CD8-positive, alpha-beta memory T cell (primary cell): ENCODE measurements at regions of chr5 and their contacts with region 1.

Region 1: GRCh38 chr5:58460732-58461286 is 923 bp upstream of the PLK2 start:
- DNase-seq: peak; percentile 75 to 87 (median 78)
- H3K4me3 ChIP-seq: peak overlapping the region; percentile 69
- H3K4me3 Mint-ChIP-seq: peak overlapping the region; percentile 84 to 93 (median 87)
- H3K27ac ChIP-seq: peak overlapping the region; percentile 52
- H3K27ac Mint-ChIP-seq: peak overlapping the region; percentile 38 to 96 (median 78)
- H3K4me1 ChIP-seq: peaks cover 11% of the 10 kb centered on the region
- H3K4me1 Mint-ChIP-seq: peaks cover 13 to 17% (median 17%) of the 10 kb centered on the region in 3 donors
- H3K27me3 ChIP-seq: no peaks in the 10 kb centered on the region
- H3K27me3 Mint-ChIP-seq: peaks cover 19 to 22% of the 10 kb centered on the region in 2 donors

Region 2: DNA sequence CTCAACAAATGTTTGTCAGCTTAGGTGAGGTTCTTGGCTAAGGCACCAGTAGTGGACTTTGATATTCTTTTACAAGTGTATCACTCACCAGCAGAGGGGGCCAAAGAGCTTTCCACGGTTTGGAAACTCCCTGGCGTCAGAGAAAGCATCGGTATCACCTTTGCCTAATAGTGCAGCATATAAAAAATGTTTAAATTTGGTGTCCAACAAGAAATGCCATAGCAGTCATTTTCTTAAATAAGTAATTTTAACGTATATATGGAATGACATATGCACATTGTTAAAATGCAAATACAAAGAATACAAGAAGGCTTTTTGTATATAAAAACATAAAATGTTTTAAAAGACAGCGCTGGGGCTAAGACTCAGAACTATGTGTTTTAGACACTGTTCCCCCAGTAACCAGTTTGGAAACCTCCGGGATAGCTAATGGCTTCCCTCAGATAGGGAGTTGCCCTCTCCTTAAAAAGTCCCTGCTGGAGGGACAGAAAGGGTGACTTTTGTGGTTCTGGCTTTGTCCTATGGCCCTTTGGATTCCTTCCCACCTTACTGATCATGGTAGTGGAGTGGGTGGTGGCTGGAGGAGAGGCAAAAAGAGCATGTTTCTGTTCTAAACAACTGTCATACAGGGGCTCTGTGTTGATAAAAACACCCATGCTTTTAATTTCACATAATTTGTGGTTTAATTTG is 1162.4 kb before region 1 on chr5:
- CTCF ChIA-PET with region 1: interaction called, 41 read pairs
- POLR2A ChIA-PET with region 1: interaction called, 3 read pairs
- DNase-seq: peak; percentile 72 to 82 (median 78)
- H3K4me3 ChIP-seq: peak overlapping the region; percentile 33
- H3K4me3 Mint-ChIP-seq: peak overlapping the region; percentile 62 to 85 (median 81)
- H3K27ac ChIP-seq: no peak overlapping the region
- H3K27ac Mint-ChIP-seq: peak overlapping the region in 6 of 8 donors; percentile 1 to 89 (median 48)
- H3K4me1 ChIP-seq: peaks cover 10% of the 10 kb centered on the region
- H3K4me1 Mint-ChIP-seq: peaks cover 11 to 26% (median 17%) of the 10 kb centered on the region in 3 donors
- H3K27me3 ChIP-seq: no peaks in the 10 kb centered on the region
- H3K27me3 Mint-ChIP-seq: peaks cover 0 to 8% of the 10 kb centered on the region in 2 donors

Region 3: GRCh38 chr5:57650360-57651069 is 810.3 kb before region 1 on chr5:
- CTCF ChIA-PET with region 1: interaction called, 12 read pairs
- POLR2A ChIA-PET with region 1: no interaction called
- DNase-seq: peak in 1 of 5 donors; percentile 1
- H3K4me3 ChIP-seq: no peak overlapping the region
- H3K4me3 Mint-ChIP-seq: no peak overlapping the region
- H3K27ac ChIP-seq: no peak overlapping the region
- H3K27ac Mint-ChIP-seq: no peak overlapping the region
- H3K4me1 ChIP-seq: no peaks in the 10 kb centered on the region
- H3K4me1 Mint-ChIP-seq: no peaks in the 10 kb centered on the region
- H3K27me3 ChIP-seq: no peaks in the 10 kb centered on the region
- H3K27me3 Mint-ChIP-seq: peaks cover 0 to 3% of the 10 kb centered on the region in 2 donors

Region 4: GRCh38 chr5:58871648-58872242 is 410.9 kb after region 1 on chr5:
- CTCF ChIA-PET with region 1: no interaction called
- POLR2A ChIA-PET with region 1: no interaction called
- DNase-seq: peak in 1 of 5 donors; percentile 13
- H3K4me3 ChIP-seq: no peak overlapping the region
- H3K4me3 Mint-ChIP-seq: no peak overlapping the region
- H3K27ac ChIP-seq: no peak overlapping the region
- H3K27ac Mint-ChIP-seq: no peak overlapping the region
- H3K4me1 ChIP-seq: no peaks in the 10 kb centered on the region
- H3K4me1 Mint-ChIP-seq: no peaks in the 10 kb centered on the region
- H3K27me3 ChIP-seq: no peaks in the 10 kb centered on the region
- H3K27me3 Mint-ChIP-seq: peaks cover 4 to 16% of the 10 kb centered on the region in 2 donors